Calu3 (cell line): ENCODE measurements at regions of chr3 and their contacts with region 1.

Region 1: DNA sequence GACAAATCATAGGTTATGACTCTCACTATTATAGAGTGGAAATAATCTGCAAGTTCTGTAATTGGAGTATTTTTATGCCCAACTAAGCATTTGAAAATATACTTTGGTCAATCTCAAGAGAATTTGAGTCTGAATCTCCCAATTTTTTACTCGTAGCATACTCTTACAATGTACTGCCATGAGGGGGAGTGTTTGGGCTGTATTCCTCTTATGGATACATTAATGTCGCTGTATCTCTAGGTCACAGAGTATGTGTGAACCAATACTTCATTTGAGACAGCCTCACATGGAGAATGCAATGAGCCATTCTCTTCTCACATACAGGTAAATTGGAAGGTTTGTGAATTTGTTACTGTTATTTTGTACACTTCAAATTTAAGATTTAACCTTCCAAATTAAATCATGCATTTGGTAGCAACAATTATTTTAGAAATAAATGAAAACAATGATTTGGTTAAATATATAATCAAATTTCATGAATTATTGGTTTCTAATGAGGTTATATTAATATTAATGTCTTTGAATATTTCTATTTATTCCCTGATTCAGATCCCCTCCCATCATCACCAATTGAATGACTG is 5.5 kb upstream of the CD200 start:
- DNase-seq: peak; percentile 40
- H3K4me3 Mint-ChIP-seq: no peak overlapping the region
- H3K27ac Mint-ChIP-seq: no peak overlapping the region
- H3K4me1 Mint-ChIP-seq: peaks cover 1% of the 10 kb centered on the region
- H3K27me3 Mint-ChIP-seq: no peaks in the 10 kb centered on the region
- CTCF ChIP-seq: no peak

Region 2: DNA sequence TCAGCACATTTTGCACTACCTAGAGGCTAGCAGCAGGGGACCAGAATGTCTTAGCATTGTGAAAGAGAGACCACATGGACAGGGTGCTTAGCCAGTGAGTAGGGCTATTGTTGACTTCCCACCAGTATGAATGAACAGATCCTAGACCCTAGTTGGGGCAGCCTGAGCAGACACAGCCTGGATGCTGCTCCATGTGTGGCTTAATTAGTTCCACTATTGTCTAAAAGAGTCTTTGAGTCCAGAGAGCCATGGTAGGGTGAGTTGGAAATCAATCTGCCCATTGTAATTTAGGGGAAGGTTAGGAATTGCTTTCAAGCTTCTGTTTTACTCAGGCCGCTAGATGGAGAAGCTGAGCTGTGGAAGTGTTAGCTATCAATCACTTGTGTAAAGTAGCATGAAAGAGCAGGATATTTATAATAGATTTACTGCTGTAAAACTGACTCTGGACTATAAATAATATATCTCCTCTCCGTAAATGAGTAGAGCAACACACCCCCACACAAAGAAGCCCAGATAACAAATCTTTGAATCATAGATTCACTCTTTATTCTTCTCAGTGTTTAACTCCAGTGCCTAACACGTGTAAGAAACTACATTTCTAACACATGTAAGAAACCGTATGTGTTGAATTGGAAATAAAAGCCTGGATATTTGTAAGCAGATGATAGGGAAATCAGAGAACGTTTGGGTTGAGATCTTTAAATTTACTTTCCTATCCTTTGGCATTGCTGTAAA is 190.3 kb before region 1 on chr3:
- CTCF ChIA-PET with region 1: interaction called, 3 read pairs
- intact Hi-C with region 1: loop called (anchors 10 kb)
- DNase-seq: peak; percentile 26
- H3K4me3 Mint-ChIP-seq: no peak overlapping the region
- H3K27ac Mint-ChIP-seq: no peak overlapping the region
- H3K4me1 Mint-ChIP-seq: peaks cover 10% of the 10 kb centered on the region
- H3K27me3 Mint-ChIP-seq: no peaks in the 10 kb centered on the region
- CTCF ChIP-seq: peak; percentile 26

Region 3: GRCh38 chr3:112338021-112338726 is 10.7 kb after region 1 on chr3:
- CTCF ChIA-PET with region 1: no interaction called
- intact Hi-C with region 1: no loop called
- DNase-seq: no peak
- H3K4me3 Mint-ChIP-seq: no peak overlapping the region
- H3K27ac Mint-ChIP-seq: no peak overlapping the region
- H3K4me1 Mint-ChIP-seq: no peaks in the 10 kb centered on the region
- H3K27me3 Mint-ChIP-seq: peaks cover 14% of the 10 kb centered on the region
- CTCF ChIP-seq: no peak

Region 4: DNA sequence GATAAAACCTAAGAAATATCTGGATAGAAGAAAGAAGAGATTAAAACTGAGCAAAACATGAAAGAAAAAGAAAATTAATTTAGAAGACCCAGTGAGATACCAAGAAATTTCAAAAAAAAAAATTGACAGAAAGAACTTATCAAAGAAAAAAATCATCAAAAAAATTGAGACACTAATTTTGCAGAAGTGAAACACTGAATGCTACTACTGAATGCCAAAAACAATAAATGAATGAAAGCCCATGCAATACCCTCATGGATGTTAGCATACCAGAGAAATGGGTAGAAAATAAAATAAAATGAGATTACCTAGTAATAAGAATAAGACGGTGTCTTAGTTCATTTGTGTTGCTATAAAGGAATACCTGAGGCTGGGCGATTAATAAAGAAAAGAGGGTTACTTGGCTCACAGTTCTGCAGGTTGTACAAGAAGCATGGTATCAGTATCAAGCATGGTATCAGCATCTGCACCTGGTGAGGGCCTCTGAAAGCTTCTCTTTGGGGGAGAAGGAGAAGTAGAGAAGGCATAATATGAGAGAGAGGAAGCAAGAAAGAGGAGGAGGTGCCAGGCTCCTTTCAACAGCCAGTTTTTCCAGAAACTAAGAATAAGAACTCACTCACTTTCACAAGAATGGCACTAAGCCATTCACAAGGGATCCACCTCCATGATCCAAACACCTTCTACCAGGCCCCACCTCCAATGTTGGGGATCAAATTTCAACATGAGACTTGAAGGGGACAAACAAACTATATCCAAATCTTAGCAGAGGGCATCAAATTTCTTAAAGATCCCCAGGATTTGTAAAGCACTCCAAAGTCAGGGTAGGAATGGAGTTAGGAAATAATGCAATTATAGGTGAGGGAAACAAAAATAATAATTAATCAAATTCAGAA is 98.6 kb after region 1 on chr3:
- CTCF ChIA-PET with region 1: no interaction called
- intact Hi-C with region 1: no loop called
- DNase-seq: no peak
- H3K4me3 Mint-ChIP-seq: no peak overlapping the region
- H3K27ac Mint-ChIP-seq: no peak overlapping the region
- H3K4me1 Mint-ChIP-seq: no peaks in the 10 kb centered on the region
- H3K27me3 Mint-ChIP-seq: no peaks in the 10 kb centered on the region
- CTCF ChIP-seq: no peak

Region 5: DNA sequence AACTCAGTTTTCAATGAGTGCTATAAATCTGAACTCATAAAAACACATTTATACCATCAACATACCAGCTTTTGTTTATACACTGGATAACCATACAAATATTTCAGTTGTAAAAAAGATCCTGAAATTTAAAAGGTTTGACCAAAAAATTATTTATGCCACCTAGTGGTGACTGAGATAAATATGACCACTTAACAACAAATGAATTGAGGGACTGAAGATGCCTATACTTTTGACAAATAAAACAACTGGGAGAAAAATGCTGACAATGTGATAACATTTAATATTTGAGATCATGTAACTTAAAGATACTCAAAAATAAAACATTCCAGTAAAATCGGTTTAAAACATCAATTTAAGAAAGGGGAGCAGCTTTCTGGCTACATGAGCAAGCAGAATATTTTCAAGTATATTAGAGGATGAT is 203.9 kb after region 1 on chr3:
- CTCF ChIA-PET with region 1: no interaction called
- intact Hi-C with region 1: loop called (anchors 5 kb)
- DNase-seq: no peak
- H3K4me3 Mint-ChIP-seq: no peak overlapping the region
- H3K27ac Mint-ChIP-seq: no peak overlapping the region
- H3K4me1 Mint-ChIP-seq: peaks cover 8% of the 10 kb centered on the region
- H3K27me3 Mint-ChIP-seq: no peaks in the 10 kb centered on the region
- CTCF ChIP-seq: peak; percentile 11